ENCODE measurements at regions of chr1 and their contacts with region 1.

Region 1: DNA sequence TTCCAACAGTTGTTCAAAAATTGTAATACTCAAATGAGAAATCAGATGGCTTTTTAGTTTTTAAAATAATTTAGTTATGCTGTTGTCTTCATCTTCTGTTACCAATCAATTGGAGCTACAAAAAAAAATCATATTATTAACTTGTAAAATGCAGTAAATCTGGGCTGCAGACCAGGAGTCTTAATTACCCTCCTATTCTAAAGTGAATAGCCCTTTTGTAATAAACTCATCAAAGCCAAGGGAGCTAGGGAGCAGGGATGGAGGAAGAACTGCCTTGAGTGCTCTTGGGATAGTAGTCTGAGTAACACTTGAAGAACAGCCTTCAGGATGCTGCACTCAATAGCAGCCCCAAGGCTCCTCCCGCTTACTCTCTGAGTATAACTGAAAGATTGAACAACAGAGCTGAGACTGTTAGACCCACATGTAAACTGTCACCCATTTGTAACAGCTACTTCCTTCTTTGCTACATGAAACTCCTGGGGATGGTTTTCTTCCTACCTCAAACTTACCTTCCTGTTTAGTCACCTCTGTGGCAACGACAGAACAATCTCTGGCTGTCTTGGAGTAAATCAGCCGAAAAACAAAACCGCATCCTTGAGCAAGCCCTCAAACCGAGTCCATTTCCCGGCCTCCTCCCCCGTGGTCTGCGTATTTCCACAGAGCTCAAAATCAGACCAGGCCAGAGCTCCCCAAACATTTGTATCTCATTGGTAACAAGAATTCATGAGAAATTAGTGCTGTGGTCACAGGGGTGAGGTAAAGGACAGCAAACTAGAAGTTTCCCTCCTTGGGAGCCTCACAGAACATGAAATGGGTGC is 55.9 kb downstream of the CD58 start:
- DNase-seq: peak; percentile 74
- H3K4me3 Mint-ChIP-seq: peak overlapping the region; percentile 75
- H3K27ac Mint-ChIP-seq: peak overlapping the region; percentile 97
- H3K4me1 Mint-ChIP-seq: peaks cover 80% of the 10 kb centered on the region
- H3K27me3 Mint-ChIP-seq: no peaks in the 10 kb centered on the region

Region 2: GRCh38 chr1:116538544-116538943 is 23.6 kb after region 1 on chr1:
- intact Hi-C with region 1: loop called (anchors 1 kb)
- DNase-seq: peak; percentile 51
- H3K4me3 Mint-ChIP-seq: peak overlapping the region; percentile 28
- H3K27ac Mint-ChIP-seq: peak overlapping the region; percentile 79
- H3K4me1 Mint-ChIP-seq: peaks cover 68% of the 10 kb centered on the region
- H3K27me3 Mint-ChIP-seq: no peaks in the 10 kb centered on the region

Region 3: DNA sequence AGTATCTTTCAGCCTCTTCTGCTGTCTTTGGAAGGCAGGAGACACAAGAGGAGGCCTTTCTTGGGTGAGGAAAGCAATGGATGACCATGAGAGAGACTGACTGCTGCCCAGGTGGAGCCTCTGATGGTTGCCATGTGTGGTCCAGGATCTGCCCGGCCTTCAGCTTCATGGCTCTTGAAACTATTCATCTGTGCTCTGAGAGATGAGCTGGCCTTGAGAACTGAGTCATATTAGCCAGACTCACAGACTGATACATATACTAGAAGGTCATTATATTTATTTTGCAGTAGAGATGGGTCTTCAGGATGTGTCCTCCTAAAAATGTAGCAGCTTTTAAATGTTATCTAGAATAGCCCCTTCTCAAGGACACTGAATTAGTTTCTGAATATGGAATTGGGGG is 428.5 kb after region 1 on chr1:
- intact Hi-C with region 1: no loop called
- DNase-seq: no peak
- H3K4me3 Mint-ChIP-seq: no peak overlapping the region
- H3K27ac Mint-ChIP-seq: peak overlapping the region; percentile 62
- H3K4me1 Mint-ChIP-seq: peaks cover 37% of the 10 kb centered on the region
- H3K27me3 Mint-ChIP-seq: no peaks in the 10 kb centered on the region